Activated CD4-positive, alpha-beta memory T cell treated with anti-CD3 and anti-CD28 coated beads for 36 hours (primary cell): ENCODE measurements at regions of chr19 and their contacts with region 1.

Region 1: DNA sequence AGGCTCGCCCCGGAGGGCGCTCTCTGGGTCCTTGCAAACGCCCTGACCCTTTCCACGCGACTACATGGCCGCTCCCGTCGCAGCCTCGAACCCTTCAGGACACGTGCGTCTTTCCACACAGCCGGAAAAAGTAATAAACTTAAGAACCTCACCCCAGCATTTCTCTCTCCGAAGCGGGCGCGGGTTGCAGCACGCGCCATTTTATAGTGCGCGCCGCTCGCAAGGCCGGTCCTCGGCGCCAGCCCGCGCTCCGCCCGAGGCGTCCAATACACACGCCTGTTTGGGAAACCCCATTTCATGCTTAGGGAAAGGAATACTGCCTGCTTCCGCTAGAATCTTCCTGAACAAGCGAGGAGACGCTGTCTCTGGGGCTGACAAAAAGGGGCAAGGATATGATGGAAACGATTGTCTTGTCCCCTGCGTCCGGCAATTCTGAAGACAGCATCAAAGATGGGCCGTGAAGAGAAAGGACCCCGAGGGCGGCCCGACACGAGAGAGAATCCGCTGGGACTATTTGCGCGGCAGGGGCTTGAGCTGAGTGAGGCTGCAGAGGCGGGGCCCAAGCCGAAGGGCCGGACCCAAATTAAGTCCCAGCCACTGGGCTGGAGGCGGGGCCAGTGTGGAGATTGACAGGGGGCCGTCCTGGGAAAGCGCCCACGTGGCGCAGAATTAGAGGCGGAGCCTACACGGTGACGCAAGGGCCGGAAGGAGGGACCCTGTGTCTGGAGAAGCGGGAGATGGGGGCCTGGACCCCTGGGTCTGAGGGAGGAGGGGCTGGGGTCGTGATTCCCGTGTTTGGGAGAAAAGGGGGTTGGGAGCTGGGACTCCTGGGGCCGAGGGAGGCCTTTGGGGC is 14.4 kb downstream of the ACP4 start:
- DNase-seq: peak; percentile 99
- H3K4me3 Mint-ChIP-seq: peak overlapping the region; percentile 96
- H3K27ac Mint-ChIP-seq: peak overlapping the region; percentile 100
- H3K4me1 Mint-ChIP-seq: peaks cover 34% of the 10 kb centered on the region
- H3K27me3 Mint-ChIP-seq: no peaks in the 10 kb centered on the region

Region 2: GRCh38 chr19:49812997-49813861 is 991.4 kb before region 1 on chr19 and contains the start of gene FUZ:
- CTCF ChIA-PET with region 1: no interaction called
- POLR2A ChIA-PET with region 1: no interaction called
- intact Hi-C with region 1: no loop called
- DNase-seq: peak; percentile 96
- H3K4me3 Mint-ChIP-seq: peak within 1 kb of the TSS; percentile 86
- H3K27ac Mint-ChIP-seq: peak within 1 kb of the TSS; percentile 96
- H3K4me1 Mint-ChIP-seq: peaks cover 35% of the 10 kb centered on the region
- H3K27me3 Mint-ChIP-seq: no peaks in the 10 kb centered on the region
- total RNA-seq, gene FUZ: 15.2 to 16.2 TPM

Region 3: GRCh38 chr19:50794439-50795237 is 10.0 kb before region 1 on chr19:
- CTCF ChIA-PET with region 1: interaction called, 4 read pairs
- POLR2A ChIA-PET with region 1: interaction called, 25 read pairs
- intact Hi-C with region 1: no loop called
- DNase-seq: peak; percentile 60
- H3K4me3 Mint-ChIP-seq: peak overlapping the region; percentile 12
- H3K27ac Mint-ChIP-seq: peak overlapping the region; percentile 49
- H3K4me1 Mint-ChIP-seq: peaks cover 9% of the 10 kb centered on the region
- H3K27me3 Mint-ChIP-seq: no peaks in the 10 kb centered on the region

Region 4: GRCh38 chr19:50817941-50818858 is 13.6 kb after region 1 on chr19:
- CTCF ChIA-PET with region 1: interaction called, 4 read pairs
- POLR2A ChIA-PET with region 1: interaction called, 7 read pairs
- intact Hi-C with region 1: loop called (anchors 1 kb)
- DNase-seq: peak; percentile 78
- H3K4me3 Mint-ChIP-seq: peak overlapping the region; percentile 79
- H3K27ac Mint-ChIP-seq: peak overlapping the region; percentile 77
- H3K4me1 Mint-ChIP-seq: peaks cover 41% of the 10 kb centered on the region
- H3K27me3 Mint-ChIP-seq: peaks cover 68% of the 10 kb centered on the region

Region 5: DNA sequence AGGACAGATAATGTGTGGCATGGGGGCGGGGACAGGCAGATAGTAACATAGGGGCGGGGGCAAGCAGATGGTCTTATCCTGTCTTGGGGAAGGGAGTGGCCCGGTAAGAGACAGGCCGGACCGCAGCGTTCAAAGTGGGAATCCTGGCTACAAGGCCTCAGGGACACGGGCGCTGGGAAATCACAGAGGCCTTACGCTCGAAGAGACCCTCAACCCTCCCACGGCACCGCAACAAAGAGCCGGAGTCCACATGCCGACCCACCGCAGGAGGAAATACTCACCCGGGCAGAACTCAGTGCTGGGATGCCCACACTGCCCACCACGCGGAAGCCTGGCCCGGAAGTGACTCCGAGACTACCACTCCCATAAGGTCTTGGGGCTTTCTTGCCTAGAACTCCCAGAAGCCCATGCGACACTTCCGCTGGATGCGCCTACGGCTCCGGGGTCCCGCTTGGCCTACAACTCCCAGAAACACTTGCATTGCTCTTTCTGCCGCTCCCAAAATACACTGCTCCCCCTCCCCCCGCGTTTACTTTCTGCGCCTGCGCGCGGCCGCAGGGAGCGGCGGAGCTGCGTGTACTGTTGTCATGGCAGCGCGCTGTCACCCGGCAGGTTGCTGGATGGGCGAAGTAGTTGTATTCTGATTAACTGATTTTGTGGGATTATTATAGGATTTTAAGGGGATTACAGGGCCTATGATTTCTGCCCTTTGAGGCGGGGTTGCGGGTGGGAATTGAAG is 303.6 kb after region 1 on chr19 and contains the start of gene CTU1:
- CTCF ChIA-PET with region 1: no interaction called
- POLR2A ChIA-PET with region 1: no interaction called
- intact Hi-C with region 1: loop called (anchors 2 kb)
- DNase-seq: peak; percentile 99
- H3K4me3 Mint-ChIP-seq: peak within 1 kb of the TSS; percentile 93
- H3K27ac Mint-ChIP-seq: peak within 1 kb of the TSS; percentile 81
- H3K4me1 Mint-ChIP-seq: peaks cover 35% of the 10 kb centered on the region
- H3K27me3 Mint-ChIP-seq: no peaks in the 10 kb centered on the region
- total RNA-seq, gene CTU1: 8.8 to 9.8 TPM